IMR-90 (cell line): ENCODE measurements at regions of chr4 and their contacts with region 1.

Region 1: GRCh38 chr4:173013232-173013930 is 155.2 kb upstream of the GALNT7 start:
- DNase-seq: peak; percentile 48
- ATAC-seq: peak; percentile 63
- H3K4me3 ChIP-seq: no peak overlapping the region
- H3K27ac ChIP-seq: no peak overlapping the region
- H3K4me1 ChIP-seq: peaks cover 1% of the 10 kb centered on the region; the same call in 1 of the 2 replicates
- H3K27me3 ChIP-seq: peaks cover 7% of the 10 kb centered on the region
- CTCF ChIP-seq: peak; percentile 63
- POLR2A ChIP-seq: no peak
- RAD21 ChIP-seq: peak; percentile 74

Region 2: DNA sequence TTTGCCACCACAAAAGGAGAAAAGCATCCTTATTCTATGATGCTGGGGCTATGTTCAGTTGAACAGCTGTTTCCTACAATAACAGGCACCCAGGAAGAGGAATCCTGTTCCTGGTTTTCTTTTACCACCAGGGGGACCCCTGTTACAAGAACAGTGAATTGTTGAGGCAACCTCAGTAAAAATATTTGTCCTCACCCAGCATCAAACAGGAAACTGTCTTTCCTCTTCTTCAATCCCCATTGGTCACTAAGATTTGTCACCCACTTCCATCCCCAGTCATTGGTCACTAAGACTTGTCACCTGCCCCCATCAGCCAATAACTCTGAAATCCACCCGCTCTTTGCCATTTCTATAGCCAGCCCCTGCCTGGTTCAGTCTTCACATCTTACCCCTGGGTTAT is 11.8 kb after region 1 on chr4:
- CTCF ChIA-PET with region 1: interaction called, 13 read pairs
- POLR2A ChIA-PET with region 1: no interaction called
- dilution Hi-C with region 1: no loop called
- in situ Hi-C with region 1: no loop called
- intact Hi-C with region 1: no loop called
- DNase-seq: peak; percentile 77
- ATAC-seq: peak; percentile 90
- H3K4me3 ChIP-seq: no peak overlapping the region
- H3K27ac ChIP-seq: no peak overlapping the region
- H3K4me1 ChIP-seq: no peaks in the 10 kb centered on the region
- H3K27me3 ChIP-seq: peaks cover 14% of the 10 kb centered on the region
- CTCF ChIP-seq: peak; percentile 87
- POLR2A ChIP-seq: no peak
- RAD21 ChIP-seq: peak; percentile 85

Region 3: DNA sequence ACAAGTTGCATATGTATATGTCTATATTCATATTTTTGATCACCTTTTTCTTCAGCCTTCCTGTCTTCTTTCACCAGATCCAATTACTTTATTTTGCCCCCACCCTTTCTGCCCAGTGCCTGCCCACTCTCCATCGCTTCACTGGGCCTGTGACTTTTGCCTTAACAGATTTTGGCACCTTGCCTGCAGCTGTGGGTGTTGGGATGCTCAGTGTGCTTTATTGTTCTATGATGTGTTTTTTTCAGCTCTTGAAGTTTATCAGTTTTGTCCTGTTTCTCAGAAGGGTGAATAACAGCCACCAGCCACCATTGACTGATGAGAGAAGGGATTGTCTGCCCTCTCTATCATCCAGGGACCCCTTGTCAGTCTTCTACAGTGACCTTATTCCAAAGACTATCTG is 78.0 kb after region 1 on chr4:
- CTCF ChIA-PET with region 1: no interaction called
- POLR2A ChIA-PET with region 1: no interaction called
- dilution Hi-C with region 1: no loop called
- in situ Hi-C with region 1: no loop called
- intact Hi-C with region 1: no loop called
- DNase-seq: no peak
- ATAC-seq: no peak
- H3K4me3 ChIP-seq: no peak overlapping the region
- H3K27ac ChIP-seq: no peak overlapping the region
- H3K4me1 ChIP-seq: no peaks in the 10 kb centered on the region
- H3K27me3 ChIP-seq: no peaks in the 10 kb centered on the region; the same call in none of the 2 replicates
- CTCF ChIP-seq: no peak
- POLR2A ChIP-seq: no peak
- RAD21 ChIP-seq: no peak

Region 4: DNA sequence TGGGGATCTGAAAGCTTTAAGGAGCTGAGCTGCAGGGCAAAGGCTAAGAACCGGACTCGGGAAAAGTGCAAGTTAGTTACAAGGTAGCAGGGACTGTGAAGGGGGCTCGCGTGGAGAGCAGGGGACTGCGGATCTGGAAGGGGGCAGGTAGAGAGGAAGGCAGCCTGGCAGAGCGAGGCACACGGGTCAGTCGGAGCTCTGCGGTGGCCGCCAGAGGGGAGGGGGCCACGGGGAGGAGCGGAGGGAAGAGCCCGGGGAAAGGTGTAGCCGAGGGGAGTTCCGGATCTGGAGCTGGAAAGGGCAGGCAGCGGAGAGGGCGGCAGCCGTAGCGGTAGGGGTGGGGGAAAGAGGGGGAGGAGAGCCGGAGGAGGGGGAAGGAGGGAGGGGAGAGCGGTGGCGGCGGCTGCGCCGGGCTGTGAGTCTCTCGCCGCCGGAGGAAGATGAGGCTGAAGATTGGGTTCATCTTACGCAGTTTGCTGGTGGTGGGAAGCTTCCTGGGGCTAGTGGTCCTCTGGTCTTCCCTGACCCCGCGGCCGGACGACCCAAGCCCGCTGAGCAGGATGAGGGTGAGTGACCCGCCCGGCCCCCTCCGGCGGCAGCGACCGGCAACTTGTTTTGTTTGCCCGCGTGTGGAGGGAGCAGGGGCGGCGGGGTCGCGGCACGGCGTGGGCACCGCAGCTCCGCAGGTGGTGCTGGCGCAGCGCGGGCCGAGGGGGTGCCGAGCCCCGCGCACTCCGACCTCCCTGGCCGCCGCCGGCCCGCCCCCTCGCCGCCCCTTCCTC is 155.2 kb after region 1 on chr4 and contains the start of gene GALNT7:
- CTCF ChIA-PET with region 1: interaction called, 5 read pairs
- POLR2A ChIA-PET with region 1: no interaction called
- dilution Hi-C with region 1: no loop called
- in situ Hi-C with region 1: no loop called
- intact Hi-C with region 1: loop called (anchors 5 kb)
- DNase-seq: peak; percentile 52
- ATAC-seq: peak; percentile 60
- H3K4me3 ChIP-seq: peak within 1 kb of the TSS; percentile 84
- H3K27ac ChIP-seq: peak within 1 kb of the TSS; percentile 78
- H3K4me1 ChIP-seq: peaks cover 2% of the 10 kb centered on the region; the same call in 1 of the 2 replicates
- H3K27me3 ChIP-seq: no peaks in the 10 kb centered on the region
- CTCF ChIP-seq: no peak
- POLR2A ChIP-seq: no peak
- RAD21 ChIP-seq: no peak
- total RNA-seq, gene GALNT7: 31.2 and 43.9 TPM in 2 replicates

Region 5: DNA sequence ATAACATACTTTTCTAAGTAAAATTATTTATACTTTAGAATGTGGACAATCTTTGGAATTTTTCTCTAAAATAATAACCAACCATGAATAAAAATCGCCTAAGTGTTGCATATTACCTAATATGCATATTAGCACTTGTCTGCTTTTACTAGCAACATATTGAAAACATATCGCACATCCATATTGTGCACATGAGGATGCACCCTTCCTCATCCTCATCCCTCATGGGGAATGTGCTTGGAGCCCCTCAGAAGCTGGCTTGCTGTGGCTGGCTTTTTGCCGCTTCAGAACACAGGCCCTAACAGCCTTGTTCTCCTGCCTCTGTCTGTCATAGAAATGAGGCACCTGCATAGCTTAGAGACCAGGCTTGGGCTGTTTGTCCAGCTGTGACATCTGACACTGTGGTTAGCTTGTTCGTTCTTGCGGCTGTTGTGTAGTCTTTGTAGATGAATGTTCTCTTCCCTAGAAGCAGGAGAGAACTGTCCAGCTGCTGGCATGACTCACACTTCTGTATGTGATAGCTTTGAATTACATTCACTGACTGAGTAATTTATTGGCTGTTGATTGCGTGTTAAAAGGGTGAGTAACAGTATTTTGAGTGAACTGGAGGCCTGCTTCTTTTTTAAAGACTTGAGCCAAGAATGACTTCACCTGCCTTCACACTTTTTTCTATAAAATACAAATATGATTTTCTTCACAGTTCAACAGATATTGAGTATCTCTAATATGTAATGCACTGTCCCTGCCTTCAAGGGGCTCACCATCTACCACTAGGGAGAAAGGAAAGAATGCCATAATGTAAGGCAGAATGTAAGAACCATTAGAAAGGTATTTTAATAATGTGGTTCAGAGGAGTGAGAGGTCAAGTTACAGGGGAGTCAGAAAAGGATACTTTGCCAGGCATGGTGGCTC is 238.9 kb after region 1 on chr4:
- CTCF ChIA-PET with region 1: interaction called, 26 read pairs
- POLR2A ChIA-PET with region 1: no interaction called
- dilution Hi-C with region 1: loop called (anchors 25 kb)
- in situ Hi-C with region 1: no loop called
- intact Hi-C with region 1: loop called (anchors 1 kb)
- DNase-seq: peak; percentile 100
- ATAC-seq: peak; percentile 94
- H3K4me3 ChIP-seq: no peak overlapping the region
- H3K27ac ChIP-seq: no peak overlapping the region
- H3K4me1 ChIP-seq: peaks cover 5% of the 10 kb centered on the region
- H3K27me3 ChIP-seq: peaks cover 19% of the 10 kb centered on the region
- CTCF ChIP-seq: no peak
- POLR2A ChIP-seq: no peak
- RAD21 ChIP-seq: no peak; the same call in none of the 2 replicates

Region 6: DNA sequence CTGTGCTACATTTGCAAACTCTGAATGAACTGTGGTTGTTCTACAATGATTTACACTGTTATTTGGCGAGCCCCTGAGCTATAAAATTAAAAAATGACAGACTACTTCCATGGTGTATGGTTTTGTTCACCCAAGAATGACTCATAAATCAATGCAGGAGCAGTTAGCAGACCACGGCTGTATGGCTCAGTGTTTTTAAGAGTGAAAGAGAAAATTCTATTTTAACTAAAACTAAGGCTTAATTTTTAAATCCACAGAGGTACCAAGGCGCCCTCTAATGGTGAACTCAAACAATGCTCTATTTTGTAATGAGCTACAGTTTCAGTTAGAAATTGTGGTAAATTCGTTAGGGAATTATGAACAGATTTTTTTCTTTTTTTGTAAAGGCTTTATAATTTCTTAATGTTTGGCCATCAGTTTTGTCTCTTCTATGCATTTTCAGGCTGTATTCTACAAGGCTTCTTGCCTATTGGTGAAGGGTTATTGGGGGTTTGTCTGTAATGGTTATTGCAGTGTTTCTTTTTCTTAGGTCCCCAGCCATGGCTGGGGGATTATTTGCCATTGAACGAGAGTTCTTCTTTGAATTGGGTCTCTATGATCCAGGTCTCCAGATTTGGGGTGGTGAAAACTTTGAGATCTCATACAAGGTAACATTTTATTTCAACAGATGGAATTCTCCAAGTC is 288.3 kb after region 1 on chr4:
- CTCF ChIA-PET with region 1: interaction called, 16 read pairs
- POLR2A ChIA-PET with region 1: no interaction called
- dilution Hi-C with region 1: no loop called
- in situ Hi-C with region 1: no loop called
- intact Hi-C with region 1: loop called (anchors 1 kb)
- DNase-seq: peak; percentile 66
- ATAC-seq: peak; percentile 75
- H3K4me3 ChIP-seq: no peak overlapping the region
- H3K27ac ChIP-seq: no peak overlapping the region
- H3K4me1 ChIP-seq: no peaks in the 10 kb centered on the region
- H3K27me3 ChIP-seq: no peaks in the 10 kb centered on the region
- CTCF ChIP-seq: peak; percentile 74
- POLR2A ChIP-seq: no peak
- RAD21 ChIP-seq: peak; percentile 63